ENCODE measurements at regions of chr14 and their contacts with region 1.

Region 1: GRCh38 chr14:22519877-22520685 is 68.9 kb downstream of the DAD1 start:
- DNase-seq: no peak
- H3K4me3 Mint-ChIP-seq: peak overlapping the region; percentile 83
- H3K27ac Mint-ChIP-seq: peak overlapping the region; percentile 90
- H3K4me1 Mint-ChIP-seq: peaks cover 83% of the 10 kb centered on the region
- H3K27me3 Mint-ChIP-seq: no peaks in the 10 kb centered on the region

Region 2: GRCh38 chr14:21269252-21270046 is 1250.6 kb before region 1 on chr14 and contains the start of gene HNRNPC:
- intact Hi-C with region 1: loop called (anchors 10 kb)
- DNase-seq: peak; percentile 100
- H3K4me3 Mint-ChIP-seq: peak within 1 kb of the TSS; percentile 92
- H3K27ac Mint-ChIP-seq: peak within 1 kb of the TSS; percentile 100
- H3K4me1 Mint-ChIP-seq: peaks cover 30% of the 10 kb centered on the region
- H3K27me3 Mint-ChIP-seq: no peaks in the 10 kb centered on the region
- total RNA-seq, gene HNRNPC: 1,009 and 1,054 TPM in 2 replicates

Region 3: GRCh38 chr14:22163051-22163450 is 357.0 kb before region 1 on chr14:
- intact Hi-C with region 1: loop called (anchors 5 kb)
- DNase-seq: peak; percentile 52
- H3K4me3 Mint-ChIP-seq: peak overlapping the region; percentile 82
- H3K27ac Mint-ChIP-seq: peak overlapping the region; percentile 85
- H3K4me1 Mint-ChIP-seq: peaks cover 16% of the 10 kb centered on the region
- H3K27me3 Mint-ChIP-seq: no peaks in the 10 kb centered on the region

Region 4: GRCh38 chr14:22200977-22201605 is 319.0 kb before region 1 on chr14:
- intact Hi-C with region 1: no loop called
- DNase-seq: peak; percentile 59
- H3K4me3 Mint-ChIP-seq: peak overlapping the region; percentile 28
- H3K27ac Mint-ChIP-seq: peak overlapping the region; percentile 48
- H3K4me1 Mint-ChIP-seq: peaks cover 9% of the 10 kb centered on the region
- H3K27me3 Mint-ChIP-seq: no peaks in the 10 kb centered on the region

Region 5: GRCh38 chr14:22505697-22506377 is 14.2 kb before region 1 on chr14:
- intact Hi-C with region 1: loop called (anchors 1 kb)
- DNase-seq: peak; percentile 71
- H3K4me3 Mint-ChIP-seq: peak overlapping the region; percentile 87
- H3K27ac Mint-ChIP-seq: peak overlapping the region; percentile 97
- H3K4me1 Mint-ChIP-seq: peaks cover 47% of the 10 kb centered on the region
- H3K27me3 Mint-ChIP-seq: no peaks in the 10 kb centered on the region

Region 6: GRCh38 chr14:22531451-22532344 is 11.6 kb after region 1 on chr14:
- intact Hi-C with region 1: loop called (anchors 1 kb)
- DNase-seq: no peak
- H3K4me3 Mint-ChIP-seq: peak overlapping the region; percentile 81
- H3K27ac Mint-ChIP-seq: peak overlapping the region; percentile 94
- H3K4me1 Mint-ChIP-seq: peaks cover 82% of the 10 kb centered on the region
- H3K27me3 Mint-ChIP-seq: no peaks in the 10 kb centered on the region

Region 7: DNA sequence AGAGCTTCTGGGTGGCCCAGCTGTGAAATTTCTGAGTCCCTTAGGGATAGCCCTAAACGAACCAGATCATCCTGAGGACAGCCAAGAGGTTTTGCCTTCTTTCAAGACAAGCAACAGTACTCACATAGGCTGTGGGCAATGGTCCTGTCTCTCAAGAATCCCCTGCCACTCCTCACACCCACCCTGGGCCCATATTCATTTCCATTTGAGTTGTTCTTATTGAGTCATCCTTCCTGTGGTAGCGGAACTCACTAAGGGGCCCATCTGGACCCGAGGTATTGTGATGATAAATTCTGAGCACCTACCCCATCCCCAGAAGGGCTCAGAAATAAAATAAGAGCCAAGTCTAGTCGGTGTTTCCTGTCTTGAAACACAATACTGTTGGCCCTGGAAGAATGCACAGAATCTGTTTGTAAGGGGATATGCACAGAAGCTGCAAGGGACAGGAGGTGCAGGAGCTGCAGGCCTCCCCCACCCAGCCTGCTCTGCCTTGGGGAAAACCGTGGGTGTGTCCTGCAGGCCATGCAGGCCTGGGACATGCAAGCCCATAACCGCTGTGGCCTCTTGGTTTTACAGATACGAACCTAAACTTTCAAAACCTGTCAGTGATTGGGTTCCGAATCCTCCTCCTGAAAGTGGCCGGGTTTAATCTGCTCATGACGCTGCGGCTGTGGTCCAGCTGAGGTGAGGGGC is 30.0 kb after region 1 on chr14:
- intact Hi-C with region 1: loop called (anchors 5 kb)
- DNase-seq: peak; percentile 91
- H3K4me3 Mint-ChIP-seq: peak overlapping the region; percentile 84
- H3K27ac Mint-ChIP-seq: peak overlapping the region; percentile 93
- H3K4me1 Mint-ChIP-seq: peaks cover 91% of the 10 kb centered on the region
- H3K27me3 Mint-ChIP-seq: no peaks in the 10 kb centered on the region

Region 8: DNA sequence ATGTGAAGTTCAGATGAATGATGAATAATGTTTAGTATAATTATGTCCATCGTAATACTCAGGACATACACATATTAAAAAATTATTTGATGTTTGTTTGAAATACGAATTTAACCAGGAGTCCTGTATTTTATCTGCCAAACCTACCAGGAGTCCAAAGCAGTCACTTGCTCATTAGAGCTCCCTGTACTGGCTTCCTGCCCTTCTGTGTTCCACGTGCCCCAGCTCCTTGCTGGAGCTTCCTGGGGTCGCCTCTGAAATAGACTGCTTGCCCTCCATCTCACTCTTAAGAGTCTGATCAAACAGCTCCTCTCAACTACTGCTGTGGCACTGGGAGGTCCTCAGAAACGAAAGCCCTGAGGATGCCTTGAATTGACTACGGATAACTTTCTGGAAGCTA is 1346.2 kb after region 1 on chr14:
- intact Hi-C with region 1: no loop called
- DNase-seq: no peak
- H3K4me3 Mint-ChIP-seq: no peak overlapping the region
- H3K27ac Mint-ChIP-seq: no peak overlapping the region
- H3K4me1 Mint-ChIP-seq: no peaks in the 10 kb centered on the region
- H3K27me3 Mint-ChIP-seq: peaks cover 5% of the 10 kb centered on the region

Measured in activated CD4-positive, alpha-beta T cell treated with anti-CD3 and anti-CD28 coated beads, Interleukin-2, amount 10 ng/mL, durations not matched to agents 24 days and 14 days (primary cell).